Right lobe of liver (tissue), 6 donors: ENCODE measurements at regions of chr1 and their contacts with region 1.

Region 1: GRCh38 chr1:116671912-116672311 is 4.4 kb upstream of the IGSF3 start:
- DNase-seq: no peak
- ATAC-seq: no peak
- H3K4me3 ChIP-seq: no peak overlapping the region
- H3K27ac ChIP-seq: no peak overlapping the region
- H3K4me1 ChIP-seq: peaks cover 0 to 2% (median 0%) of the 10 kb centered on the region in 4 donors
- H3K27me3 ChIP-seq: no peaks in the 10 kb centered on the region
- CTCF ChIP-seq: no peak
- POLR2A ChIP-seq: no peak

Region 2: DNA sequence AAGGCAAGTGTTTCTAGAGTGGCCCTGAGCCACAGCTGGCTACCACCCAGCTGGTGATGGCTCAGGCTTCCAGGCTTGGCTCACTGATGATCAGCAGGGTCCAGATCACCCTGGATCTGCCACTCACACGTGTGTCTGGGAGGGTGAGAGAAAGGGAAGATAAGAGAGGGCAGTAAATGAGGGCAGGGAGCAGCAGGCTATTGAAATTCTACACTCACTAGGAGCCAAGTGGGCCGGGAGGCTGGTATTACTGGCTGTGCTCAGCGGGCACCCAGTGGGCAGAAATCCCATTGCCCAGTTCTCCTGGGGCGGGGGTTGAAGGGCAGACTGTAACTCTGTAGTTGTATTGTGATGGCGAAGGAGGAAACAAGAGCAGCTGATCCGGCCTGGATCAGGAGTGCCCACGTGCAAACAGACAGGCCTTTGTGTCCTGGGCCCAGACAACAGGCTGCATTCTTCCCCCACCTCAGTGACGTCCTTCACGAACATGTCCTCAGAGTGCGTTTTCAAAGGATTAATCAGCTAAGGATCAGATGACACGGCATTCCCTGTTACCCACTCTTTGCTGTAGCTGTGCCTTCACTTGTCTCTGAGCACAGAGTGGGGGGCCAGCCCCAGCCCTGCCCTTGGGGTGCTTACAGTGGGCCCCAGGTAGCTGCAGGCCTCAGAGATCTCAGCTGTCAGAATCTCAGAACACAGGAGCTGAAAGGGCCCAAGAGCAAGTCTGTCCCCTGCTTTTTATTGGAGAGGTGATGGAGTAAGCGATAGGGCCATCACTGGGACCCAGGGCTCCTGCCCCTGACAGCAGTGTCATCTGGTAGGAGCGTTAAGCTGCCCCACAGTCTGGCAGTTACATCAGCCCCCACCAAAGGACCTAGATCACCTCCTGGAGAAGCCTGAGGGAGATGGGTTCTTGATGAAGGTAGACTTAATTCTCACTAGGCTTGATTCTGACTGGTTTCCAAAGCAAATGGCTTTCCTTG is 238.3 kb before region 1 on chr1:
- intact Hi-C with region 1: no loop called
- DNase-seq: peak in 2 of 3 donors; percentile 85 to 91
- ATAC-seq: peak; percentile 81 to 96 (median 86)
- H3K4me3 ChIP-seq: no peak overlapping the region
- H3K27ac ChIP-seq: peak overlapping the region in 1 of 3 donors; percentile 41
- H3K4me1 ChIP-seq: peaks cover 0 to 5% (median 0%) of the 10 kb centered on the region in 4 donors
- H3K27me3 ChIP-seq: no peaks in the 10 kb centered on the region
- CTCF ChIP-seq: no peak
- POLR2A ChIP-seq: no peak

Region 3: GRCh38 chr1:116465845-116466685 is 205.8 kb before region 1 on chr1:
- intact Hi-C with region 1: no loop called
- DNase-seq: no peak
- ATAC-seq: peak; percentile 80 to 95 (median 90)
- H3K4me3 ChIP-seq: peak overlapping the region in 1 of 3 donors; percentile 15
- H3K27ac ChIP-seq: peak overlapping the region in 2 of 3 donors; percentile 25 to 77
- H3K4me1 ChIP-seq: peaks cover 0 to 18% (median 2%) of the 10 kb centered on the region in 4 donors
- H3K27me3 ChIP-seq: no peaks in the 10 kb centered on the region
- CTCF ChIP-seq: no peak
- POLR2A ChIP-seq: no peak

Region 4: GRCh38 chr1:116576960-116577359 is 95.0 kb before region 1 on chr1:
- intact Hi-C with region 1: loop called (anchors 2 to 10 kb)
- DNase-seq: no peak
- ATAC-seq: no peak
- H3K4me3 ChIP-seq: no peak overlapping the region
- H3K27ac ChIP-seq: no peak overlapping the region
- H3K4me1 ChIP-seq: no peaks in the 10 kb centered on the region
- H3K27me3 ChIP-seq: no peaks in the 10 kb centered on the region
- CTCF ChIP-seq: no peak
- POLR2A ChIP-seq: no peak